T-cell (primary cell): ENCODE measurements at regions of chr22 and their contacts with region 1.

Region 1: GRCh38 chr22:19488884-19489843 is 9.4 kb downstream of the CDC45 start:
- DNase-seq: peak in 1 of 35 experiments; percentile 16
- ATAC-seq: peak in 1 of 4 experiments; percentile 66
- H3K4me3 ChIP-seq: no peak overlapping the region
- H3K4me3 Mint-ChIP-seq: no peak overlapping the region
- H3K27ac ChIP-seq: no peak overlapping the region
- H3K27ac Mint-ChIP-seq: no peak overlapping the region
- H3K4me1 ChIP-seq: no peaks in the 10 kb centered on the region
- H3K4me1 Mint-ChIP-seq: peaks cover 0 to 8% (median 6%) of the 10 kb centered on the region in 3 donors
- H3K27me3 ChIP-seq: peaks cover 0 to 2% of the 10 kb centered on the region in 2 experiments
- H3K27me3 Mint-ChIP-seq: no peaks in the 10 kb centered on the region

Region 2: GRCh38 chr22:19537941-19538488 is 48.9 kb after region 1 on chr22:
- CTCF ChIA-PET with region 1: no interaction called
- POLR2A ChIA-PET with region 1: interaction called in 1 of 2 experiments, 14 read pairs
- DNase-seq: no peak
- ATAC-seq: no peak
- H3K4me3 ChIP-seq: no peak overlapping the region
- H3K4me3 Mint-ChIP-seq: no peak overlapping the region
- H3K27ac ChIP-seq: no peak overlapping the region
- H3K27ac Mint-ChIP-seq: no peak overlapping the region
- H3K4me1 ChIP-seq: no peaks in the 10 kb centered on the region
- H3K4me1 Mint-ChIP-seq: no peaks in the 10 kb centered on the region
- H3K27me3 ChIP-seq: peaks cover 0 to 6% of the 10 kb centered on the region in 2 experiments
- H3K27me3 Mint-ChIP-seq: peaks cover 0 to 5% of the 10 kb centered on the region in 2 donors